ENCODE measurements at regions of chr3 and their contacts with region 1.

Region 1: DNA sequence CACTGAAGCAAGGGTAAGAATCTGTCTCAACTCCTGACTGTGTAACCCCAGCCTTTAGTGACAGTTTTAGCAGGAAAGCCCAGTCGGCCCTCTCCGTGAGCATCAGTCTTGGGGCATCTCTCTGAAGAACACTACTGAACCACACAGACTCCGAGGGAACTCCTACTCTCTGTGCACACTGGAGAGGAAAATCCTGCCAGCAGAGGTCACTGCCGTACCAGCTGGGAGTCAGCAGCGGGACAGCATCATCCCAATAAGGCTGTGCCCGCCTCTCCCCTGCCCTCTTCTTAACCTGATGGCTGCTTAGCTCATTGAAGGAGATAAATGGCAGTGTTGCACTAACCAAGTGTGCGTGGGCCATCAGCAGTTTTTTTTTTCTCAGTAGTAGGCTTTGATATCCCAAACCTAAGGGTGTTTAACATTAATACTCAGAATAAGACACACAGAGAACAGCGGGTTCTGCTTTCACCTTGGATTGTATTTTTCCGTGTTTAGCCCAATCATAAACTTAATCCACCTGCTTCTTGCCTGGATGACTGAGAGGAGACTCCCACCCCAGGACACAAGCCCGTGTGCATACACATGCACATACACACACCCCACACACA is 26.6 kb upstream of the RASA2 start:
- DNase-seq: peak; percentile 80 to 87 (median 82)
- H3K4me3 ChIP-seq: no peak overlapping the region
- H3K4me3 Mint-ChIP-seq: no peak overlapping the region
- H3K27ac ChIP-seq: no peak overlapping the region
- H3K27ac Mint-ChIP-seq: peak overlapping the region in 2 of 7 donors; percentile 6 to 18
- H3K4me1 ChIP-seq: peaks cover under 1% of the 10 kb centered on the region
- H3K4me1 Mint-ChIP-seq: peaks cover under 1 to 13% (median 6%) of the 10 kb centered on the region in 4 donors
- H3K27me3 ChIP-seq: no peaks in the 10 kb centered on the region
- H3K27me3 Mint-ChIP-seq: no peaks in the 10 kb centered on the region

Region 2: GRCh38 chr3:141311496-141312353 is 148.5 kb before region 1 on chr3:
- CTCF ChIA-PET with region 1: interaction called, 428 read pairs
- POLR2A ChIA-PET with region 1: interaction called, 11 read pairs
- intact Hi-C with region 1: no loop called
- DNase-seq: peak; percentile 97 to 99 (median 98)
- H3K4me3 ChIP-seq: peak overlapping the region; percentile 68 to 73
- H3K4me3 Mint-ChIP-seq: peak overlapping the region; percentile 92 to 100 (median 98)
- H3K27ac ChIP-seq: peak overlapping the region; percentile 66
- H3K27ac Mint-ChIP-seq: peak overlapping the region; percentile 89 to 99 (median 97)
- H3K4me1 ChIP-seq: peaks cover 46% of the 10 kb centered on the region
- H3K4me1 Mint-ChIP-seq: peaks cover 32 to 60% (median 49%) of the 10 kb centered on the region in 4 donors
- H3K27me3 ChIP-seq: no peaks in the 10 kb centered on the region
- H3K27me3 Mint-ChIP-seq: no peaks in the 10 kb centered on the region

Region 3: GRCh38 chr3:141471160-141471559 is 11.0 kb after region 1 on chr3:
- CTCF ChIA-PET with region 1: interaction called, 49 read pairs
- POLR2A ChIA-PET with region 1: no interaction called
- intact Hi-C with region 1: loop called (anchors 1 kb)
- DNase-seq: no peak
- H3K4me3 ChIP-seq: no peak overlapping the region
- H3K4me3 Mint-ChIP-seq: no peak overlapping the region
- H3K27ac ChIP-seq: no peak overlapping the region
- H3K27ac Mint-ChIP-seq: no peak overlapping the region
- H3K4me1 ChIP-seq: peaks cover 12% of the 10 kb centered on the region
- H3K4me1 Mint-ChIP-seq: peaks cover 12 to 20% (median 16%) of the 10 kb centered on the region in 4 donors
- H3K27me3 ChIP-seq: no peaks in the 10 kb centered on the region
- H3K27me3 Mint-ChIP-seq: no peaks in the 10 kb centered on the region

Region 4: DNA sequence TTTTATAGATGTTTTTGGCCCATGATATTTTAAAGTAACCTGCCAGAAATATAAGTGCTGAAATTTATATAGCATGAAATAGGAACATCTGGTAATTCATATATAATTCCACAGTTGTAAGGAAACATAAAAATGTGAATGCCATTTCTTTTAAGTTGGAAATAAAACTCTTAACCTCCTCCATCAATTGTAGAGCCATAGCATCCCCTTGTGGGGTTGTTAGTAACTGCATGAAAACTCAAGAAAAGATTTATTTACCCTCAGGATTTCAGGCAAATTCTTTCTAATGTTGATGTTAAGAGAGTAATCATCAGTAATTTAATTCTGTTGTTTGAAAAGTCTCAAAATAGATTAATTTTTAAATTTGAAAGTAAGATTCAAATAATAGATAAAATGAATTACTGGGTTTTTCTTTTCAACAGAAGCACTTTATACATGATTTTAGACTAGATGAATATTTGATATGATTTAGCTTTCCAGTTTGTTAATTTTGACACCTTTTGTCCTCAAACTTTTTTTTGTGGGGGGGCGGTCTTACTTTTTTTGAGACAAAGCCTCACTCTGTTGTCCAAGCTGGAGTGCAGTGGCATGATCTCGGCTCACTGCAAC is 101.3 kb after region 1 on chr3:
- CTCF ChIA-PET with region 1: interaction called, 309 read pairs
- POLR2A ChIA-PET with region 1: interaction called, 5 read pairs
- intact Hi-C with region 1: loop called (anchors 1 kb)
- DNase-seq: peak; percentile 55 to 73 (median 70)
- H3K4me3 ChIP-seq: no peak overlapping the region
- H3K4me3 Mint-ChIP-seq: no peak overlapping the region
- H3K27ac ChIP-seq: no peak overlapping the region
- H3K27ac Mint-ChIP-seq: peak overlapping the region in 6 of 7 donors; percentile 35 to 85 (median 78)
- H3K4me1 ChIP-seq: peaks cover 33% of the 10 kb centered on the region
- H3K4me1 Mint-ChIP-seq: peaks cover 15 to 22% (median 20%) of the 10 kb centered on the region in 4 donors
- H3K27me3 ChIP-seq: no peaks in the 10 kb centered on the region
- H3K27me3 Mint-ChIP-seq: no peaks in the 10 kb centered on the region

Region 5: GRCh38 chr3:141644931-141645330 is 184.7 kb after region 1 on chr3:
- CTCF ChIA-PET with region 1: interaction called, 42 read pairs
- POLR2A ChIA-PET with region 1: no interaction called
- intact Hi-C with region 1: loop called (anchors 1 kb)
- DNase-seq: peak; percentile 49 to 58 (median 56)
- H3K4me3 ChIP-seq: no peak overlapping the region
- H3K4me3 Mint-ChIP-seq: peak overlapping the region in 1 of 8 donors; percentile 1
- H3K27ac ChIP-seq: no peak overlapping the region
- H3K27ac Mint-ChIP-seq: peak overlapping the region in 2 of 7 donors; percentile 23 to 61
- H3K4me1 ChIP-seq: no peaks in the 10 kb centered on the region
- H3K4me1 Mint-ChIP-seq: peaks cover 0 to 3% (median 1%) of the 10 kb centered on the region in 4 donors
- H3K27me3 ChIP-seq: no peaks in the 10 kb centered on the region
- H3K27me3 Mint-ChIP-seq: no peaks in the 10 kb centered on the region

Region 6: DNA sequence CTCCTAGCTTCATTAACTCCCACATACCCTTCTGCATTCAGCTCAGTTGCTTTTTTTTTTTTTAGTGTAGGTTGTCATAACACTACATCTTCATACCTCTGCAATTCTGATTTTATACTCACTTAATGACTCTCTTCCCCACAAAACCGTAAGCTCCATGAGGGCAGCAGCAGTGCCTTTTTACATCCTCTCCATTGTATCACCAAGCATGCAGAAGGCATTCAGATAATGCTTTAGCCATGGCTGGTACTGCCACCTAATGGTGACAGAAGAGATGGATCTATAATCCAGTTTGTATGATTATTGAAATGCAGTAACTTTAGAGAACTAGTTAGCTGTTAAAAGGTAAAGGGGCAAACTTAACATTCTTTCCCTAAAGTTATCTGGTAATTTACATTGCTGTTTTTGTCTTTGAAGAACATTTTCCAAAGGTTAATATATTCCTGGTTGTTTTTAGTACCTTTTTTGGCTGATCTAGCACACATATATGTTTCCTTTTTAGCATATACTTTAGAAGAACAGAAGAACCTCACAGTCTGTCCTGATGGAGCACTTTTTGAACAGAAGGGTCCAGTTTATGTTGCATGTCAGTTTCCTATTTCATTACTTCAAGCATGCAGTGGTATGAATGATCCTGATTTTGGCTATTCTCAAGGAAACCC is 453.1 kb after region 1 on chr3:
- CTCF ChIA-PET with region 1: interaction called, 8 read pairs
- POLR2A ChIA-PET with region 1: no interaction called
- intact Hi-C with region 1: loop called (anchors 1 kb)
- DNase-seq: peak; percentile 56 to 66 (median 64)
- H3K4me3 ChIP-seq: no peak overlapping the region
- H3K4me3 Mint-ChIP-seq: no peak overlapping the region
- H3K27ac ChIP-seq: no peak overlapping the region
- H3K27ac Mint-ChIP-seq: peak overlapping the region in 5 of 7 donors; percentile 3 to 85 (median 52)
- H3K4me1 ChIP-seq: no peaks in the 10 kb centered on the region
- H3K4me1 Mint-ChIP-seq: peaks cover 0 to 10% (median 3%) of the 10 kb centered on the region in 4 donors
- H3K27me3 ChIP-seq: no peaks in the 10 kb centered on the region
- H3K27me3 Mint-ChIP-seq: no peaks in the 10 kb centered on the region

Measured in CD4-positive, alpha-beta memory T cell (primary cell).